ENCODE measurements at regions of chr5 and their contacts with region 1.

Region 1: GRCh38 chr5:168987543-168988300 is 313.2 kb downstream of the SLIT3 start:
- DNase-seq: peak; percentile 82
- H3K4me3 Mint-ChIP-seq: no peak overlapping the region
- H3K27ac Mint-ChIP-seq: no peak overlapping the region
- H3K4me1 Mint-ChIP-seq: no peaks in the 10 kb centered on the region
- H3K27me3 Mint-ChIP-seq: peaks cover 54% of the 10 kb centered on the region
- CTCF ChIP-seq: peak; percentile 48

Region 2: DNA sequence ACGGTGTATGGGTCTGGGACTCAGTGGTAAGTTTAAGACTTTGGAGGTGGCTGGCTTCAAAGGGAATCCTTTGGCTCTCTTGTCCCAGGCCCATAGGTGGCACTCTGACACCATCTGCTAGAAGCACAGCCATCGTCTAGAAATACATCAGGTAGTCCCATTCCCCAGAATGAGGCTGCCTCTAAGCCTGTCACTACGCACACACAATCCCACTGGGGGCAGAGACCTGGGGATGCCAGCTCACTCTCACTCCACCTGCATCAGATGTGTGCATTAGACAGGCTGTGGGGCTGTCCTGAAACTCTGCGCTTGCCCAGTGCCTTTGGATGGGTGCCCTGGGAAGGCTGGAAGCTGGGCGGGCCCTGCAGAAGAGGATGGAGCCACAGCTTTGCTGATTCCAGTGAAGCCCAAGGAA is 281.1 kb before region 1 on chr5:
- CTCF ChIA-PET with region 1: interaction called, 3 read pairs
- intact Hi-C with region 1: loop called (anchors 10 kb)
- DNase-seq: peak; percentile 66
- H3K4me3 Mint-ChIP-seq: no peak overlapping the region
- H3K27ac Mint-ChIP-seq: no peak overlapping the region
- H3K4me1 Mint-ChIP-seq: peaks cover under 1% of the 10 kb centered on the region
- H3K27me3 Mint-ChIP-seq: peaks cover 35% of the 10 kb centered on the region
- CTCF ChIP-seq: peak; percentile 18

Region 3: GRCh38 chr5:169197343-169197742 is 209.6 kb after region 1 on chr5:
- CTCF ChIA-PET with region 1: interaction called, 5 read pairs
- intact Hi-C with region 1: loop called (anchors 1 kb)
- DNase-seq: peak; percentile 12
- H3K4me3 Mint-ChIP-seq: no peak overlapping the region
- H3K27ac Mint-ChIP-seq: no peak overlapping the region
- H3K4me1 Mint-ChIP-seq: no peaks in the 10 kb centered on the region
- H3K27me3 Mint-ChIP-seq: peaks cover 13% of the 10 kb centered on the region
- CTCF ChIP-seq: no peak

Region 4: DNA sequence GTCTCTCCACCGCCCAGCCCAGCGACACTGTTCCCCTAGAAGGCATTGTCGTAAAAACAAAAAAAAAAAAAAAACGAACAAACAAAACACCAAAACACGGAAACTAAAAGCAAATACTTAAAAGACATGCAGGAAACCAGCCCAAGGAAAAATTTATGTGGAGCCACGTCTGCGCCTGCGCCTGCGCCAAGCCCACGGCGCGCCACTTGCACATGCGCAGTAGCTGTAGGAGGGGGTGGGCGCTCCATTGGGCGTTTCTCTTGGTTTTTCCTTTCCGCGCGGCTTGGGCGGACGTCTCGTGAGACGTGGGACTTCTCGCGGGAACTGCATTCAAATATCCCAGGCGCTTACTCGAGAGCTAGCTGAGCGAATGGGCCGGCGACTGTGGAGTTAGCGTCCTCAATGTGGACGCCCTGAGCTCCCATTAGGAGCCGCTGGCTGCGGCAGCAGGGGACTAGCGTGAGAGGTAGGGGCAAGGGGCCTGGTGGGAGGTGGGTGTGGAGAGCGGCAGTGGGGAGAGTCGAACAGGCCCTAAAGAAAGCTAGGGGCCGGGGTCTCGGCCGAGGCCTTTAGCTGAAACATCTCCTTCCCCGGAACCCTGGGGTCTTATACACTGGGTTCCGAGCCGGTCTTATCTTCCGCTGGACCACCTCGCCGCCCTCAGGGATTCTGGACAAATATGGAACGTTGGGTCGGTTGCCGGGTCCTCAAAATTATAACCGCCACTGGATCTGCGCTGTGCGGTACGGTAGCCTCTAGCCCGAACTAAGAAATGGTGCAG is 595.9 kb after region 1 on chr5 and contains the start of gene SPDL1:
- CTCF ChIA-PET with region 1: no interaction called
- intact Hi-C with region 1: loop called (anchors 1 kb)
- DNase-seq: peak; percentile 95
- H3K4me3 Mint-ChIP-seq: peak within 1 kb of the TSS; percentile 95
- H3K27ac Mint-ChIP-seq: peak within 1 kb of the TSS; percentile 90
- H3K4me1 Mint-ChIP-seq: peaks cover 26% of the 10 kb centered on the region
- H3K27me3 Mint-ChIP-seq: peaks cover 14% of the 10 kb centered on the region
- CTCF ChIP-seq: no peak
- total RNA-seq, gene SPDL1: 41.7 and 45.8 TPM in 2 replicates

Region 5: DNA sequence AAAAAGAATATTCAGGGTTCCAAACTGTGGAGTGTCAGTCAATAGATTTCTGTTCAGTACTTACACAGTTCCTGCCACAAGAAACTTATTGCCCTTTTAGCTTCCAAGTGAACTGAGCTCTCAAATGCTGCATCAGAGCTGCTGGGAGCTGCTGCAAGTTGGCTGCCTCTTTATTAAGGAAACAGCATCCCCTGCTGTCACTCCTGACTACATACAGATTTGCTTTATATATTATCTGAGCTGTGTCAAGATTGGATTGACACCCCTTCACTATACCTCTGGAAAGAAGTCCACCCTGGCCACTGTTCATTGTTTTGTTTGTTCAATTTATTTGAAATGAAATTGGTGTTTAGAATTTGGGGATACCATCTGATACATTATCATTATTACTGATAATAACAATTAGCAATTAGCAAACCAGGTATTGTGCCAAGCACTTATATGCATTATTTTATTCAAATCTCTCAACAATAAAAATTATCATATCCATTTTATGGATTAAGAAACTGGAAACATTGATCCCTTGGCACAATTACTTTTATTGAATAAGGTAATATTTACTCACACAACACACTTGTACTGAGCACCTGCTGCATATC is 1228.6 kb after region 1 on chr5:
- CTCF ChIA-PET with region 1: interaction called, 7 read pairs
- intact Hi-C with region 1: loop called (anchors 2 kb)
- DNase-seq: peak; percentile 67
- H3K4me3 Mint-ChIP-seq: no peak overlapping the region
- H3K27ac Mint-ChIP-seq: no peak overlapping the region
- H3K4me1 Mint-ChIP-seq: no peaks in the 10 kb centered on the region
- H3K27me3 Mint-ChIP-seq: no peaks in the 10 kb centered on the region
- CTCF ChIP-seq: peak; percentile 77